Activated CD4-positive, alpha-beta T cell treated with anti-CD3 and anti-CD28 coated beads, Interleukin-2, amount 10 ng/mL, durations not matched to agents 24 days and 14 days (primary cell): ENCODE measurements at regions of chr11 and their contacts with region 1.

Region 1: GRCh38 chr11:45964911-45965389 is 42.5 kb downstream of the LARGE2 start:
- DNase-seq: peak; percentile 86
- H3K4me3 Mint-ChIP-seq: no peak overlapping the region
- H3K27ac Mint-ChIP-seq: no peak overlapping the region
- H3K4me1 Mint-ChIP-seq: no peaks in the 10 kb centered on the region
- H3K27me3 Mint-ChIP-seq: no peaks in the 10 kb centered on the region

Region 2: GRCh38 chr11:46006418-46007070 is 41.6 kb after region 1 on chr11:
- intact Hi-C with region 1: loop called (anchors 1 kb)
- DNase-seq: peak; percentile 83
- H3K4me3 Mint-ChIP-seq: no peak overlapping the region
- H3K27ac Mint-ChIP-seq: no peak overlapping the region
- H3K4me1 Mint-ChIP-seq: no peaks in the 10 kb centered on the region
- H3K27me3 Mint-ChIP-seq: no peaks in the 10 kb centered on the region

Region 3: GRCh38 chr11:46308631-46309419 is 343.9 kb after region 1 on chr11:
- intact Hi-C with region 1: loop called (anchors 5 kb)
- DNase-seq: peak; percentile 90
- H3K4me3 Mint-ChIP-seq: no peak overlapping the region
- H3K27ac Mint-ChIP-seq: no peak overlapping the region
- H3K4me1 Mint-ChIP-seq: peaks cover 9% of the 10 kb centered on the region
- H3K27me3 Mint-ChIP-seq: peaks cover 2% of the 10 kb centered on the region